ENCODE measurements at regions of chr1 and their contacts with region 1.

Region 1: GRCh38 chr1:19882111-19883071 is at the start of gene OTUD3:
- DNase-seq: peak; percentile 89 to 99 (median 94)
- ATAC-seq: peak; percentile 98
- H3K4me3 ChIP-seq: peak within 1 kb of the TSS; percentile 84
- H3K4me3 Mint-ChIP-seq: peak within 1 kb of the TSS; percentile 91
- H3K27ac ChIP-seq: peak within 1 kb of the TSS in 1 of 2 donors; percentile 55
- H3K27ac Mint-ChIP-seq: peak within 1 kb of the TSS; percentile 65
- H3K4me1 ChIP-seq: peaks cover 19% of the 10 kb centered on the region
- H3K4me1 Mint-ChIP-seq: peaks cover 47% of the 10 kb centered on the region
- H3K27me3 ChIP-seq: no peaks in the 10 kb centered on the region
- H3K27me3 Mint-ChIP-seq: peaks cover 8% of the 10 kb centered on the region
- CTCF ChIP-seq: peak; percentile 90
- total RNA-seq, gene OTUD3: 11.4 to 12.6 TPM

Region 2: GRCh38 chr1:19209990-19210771 is 672.2 kb before region 1 on chr1 and contains the start of gene UBR4:
- CTCF ChIA-PET with region 1: no interaction called
- POLR2A ChIA-PET with region 1: interaction called, 3 read pairs
- intact Hi-C with region 1: loop called in 1 of 2 experiments (anchors 10 kb)
- DNase-seq: peak; percentile 92 to 99 (median 96)
- ATAC-seq: peak; percentile 92
- H3K4me3 ChIP-seq: peak within 1 kb of the TSS; percentile 93
- H3K4me3 Mint-ChIP-seq: peak within 1 kb of the TSS; percentile 96
- H3K27ac ChIP-seq: peak within 1 kb of the TSS; percentile 87 to 92
- H3K27ac Mint-ChIP-seq: peak within 1 kb of the TSS; percentile 95
- H3K4me1 ChIP-seq: peaks cover 42% of the 10 kb centered on the region
- H3K4me1 Mint-ChIP-seq: peaks cover 77% of the 10 kb centered on the region
- H3K27me3 ChIP-seq: no peaks in the 10 kb centered on the region
- H3K27me3 Mint-ChIP-seq: no peaks in the 10 kb centered on the region
- CTCF ChIP-seq: no peak
- total RNA-seq, gene UBR4: 116 to 125 TPM

Region 3: DNA sequence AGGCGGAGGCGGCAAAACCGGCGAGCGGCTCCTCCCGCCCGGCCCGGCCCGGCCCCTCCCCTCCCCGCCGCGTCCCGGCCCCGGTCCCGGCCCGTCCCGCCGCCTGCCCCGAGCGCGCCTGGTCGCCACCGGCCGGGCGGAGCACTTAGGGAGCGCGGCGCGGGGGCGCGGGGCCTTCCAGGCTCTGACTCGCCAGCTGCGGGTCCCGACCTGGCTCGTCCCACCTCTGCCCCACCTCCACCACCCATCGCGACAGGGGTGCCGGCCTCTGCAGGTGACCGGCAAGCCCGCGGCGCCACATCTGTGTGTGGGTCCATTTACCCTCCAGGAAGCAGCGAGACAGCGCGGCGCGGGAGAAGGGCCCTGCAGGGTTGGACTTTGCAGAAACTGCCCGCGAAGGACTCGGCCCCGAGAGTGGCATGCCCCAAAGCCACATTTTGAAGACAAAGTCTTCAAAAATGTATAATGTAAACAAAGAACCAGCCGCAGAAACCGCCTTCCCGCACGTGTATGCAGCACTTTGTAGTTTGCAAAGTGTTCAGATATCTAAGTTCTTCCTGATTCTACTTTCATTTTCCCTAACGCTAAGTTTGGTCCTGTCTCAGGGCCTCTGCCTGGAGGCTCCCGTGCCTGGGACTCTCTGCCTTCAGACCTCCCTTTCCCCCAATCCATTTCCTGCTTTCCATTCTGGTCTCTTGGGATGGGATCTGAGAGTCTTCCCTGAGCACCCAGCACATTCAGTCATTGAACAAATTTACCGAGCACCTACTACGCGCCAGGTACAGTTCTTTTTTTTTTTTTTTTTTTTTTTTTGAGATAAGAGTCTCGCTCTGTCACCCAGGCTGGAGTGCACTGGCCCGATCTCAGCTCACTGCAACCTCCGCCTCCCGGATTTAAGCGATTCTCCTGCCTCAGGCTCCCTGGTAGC is 82.2 kb before region 1 on chr1 and contains the start of gene TMCO4:
- CTCF ChIA-PET with region 1: no interaction called
- POLR2A ChIA-PET with region 1: no interaction called
- intact Hi-C with region 1: loop called in 1 of 2 experiments (anchors 2 kb)
- DNase-seq: peak; percentile 20 to 69 (median 38)
- ATAC-seq: peak; percentile 66
- H3K4me3 ChIP-seq: peak within 1 kb of the TSS; percentile 90
- H3K4me3 Mint-ChIP-seq: peak within 1 kb of the TSS; percentile 96
- H3K27ac ChIP-seq: peak within 1 kb of the TSS; percentile 65 to 85
- H3K27ac Mint-ChIP-seq: peak within 1 kb of the TSS; percentile 95
- H3K4me1 ChIP-seq: peaks cover 30% of the 10 kb centered on the region
- H3K4me1 Mint-ChIP-seq: peaks cover 31% of the 10 kb centered on the region
- H3K27me3 ChIP-seq: no peaks in the 10 kb centered on the region
- H3K27me3 Mint-ChIP-seq: no peaks in the 10 kb centered on the region
- CTCF ChIP-seq: no peak
- total RNA-seq, gene TMCO4: 12.4 to 13.9 TPM

Region 4: GRCh38 chr1:20485527-20486456 is 603.4 kb after region 1 on chr1 and contains the start of gene CAMK2N1:
- CTCF ChIA-PET with region 1: no interaction called
- POLR2A ChIA-PET with region 1: interaction called, 4 read pairs
- intact Hi-C with region 1: loop called in 1 of 2 experiments (anchors 1 kb)
- DNase-seq: peak; percentile 23 to 82 (median 60)
- ATAC-seq: peak; percentile 73
- H3K4me3 ChIP-seq: peak within 1 kb of the TSS; percentile 62
- H3K4me3 Mint-ChIP-seq: peak within 1 kb of the TSS; percentile 86
- H3K27ac ChIP-seq: no peak within 1 kb of the TSS
- H3K27ac Mint-ChIP-seq: peak within 1 kb of the TSS; percentile 60
- H3K4me1 ChIP-seq: peaks cover 29% of the 10 kb centered on the region
- H3K4me1 Mint-ChIP-seq: peaks cover 17% of the 10 kb centered on the region
- H3K27me3 ChIP-seq: peaks cover 31 to 51% of the 10 kb centered on the region in 2 experiments
- H3K27me3 Mint-ChIP-seq: peaks cover 59% of the 10 kb centered on the region
- CTCF ChIP-seq: no peak
- total RNA-seq, gene CAMK2N1: 2.3 TPM

Region 5: GRCh38 chr1:20633190-20634064 is 751.0 kb after region 1 on chr1 and contains the start of gene PINK1:
- CTCF ChIA-PET with region 1: no interaction called
- POLR2A ChIA-PET with region 1: interaction called, 4 read pairs
- intact Hi-C with region 1: loop called in 1 of 2 experiments (anchors 5 kb)
- DNase-seq: peak; percentile 72 to 97 (median 86)
- ATAC-seq: peak; percentile 84
- H3K4me3 ChIP-seq: peak within 1 kb of the TSS; percentile 69
- H3K4me3 Mint-ChIP-seq: peak within 1 kb of the TSS; percentile 94
- H3K27ac ChIP-seq: peak within 1 kb of the TSS; percentile 52 to 72
- H3K27ac Mint-ChIP-seq: peak within 1 kb of the TSS; percentile 87
- H3K4me1 ChIP-seq: peaks cover 18% of the 10 kb centered on the region
- H3K4me1 Mint-ChIP-seq: peaks cover 12% of the 10 kb centered on the region
- H3K27me3 ChIP-seq: peaks cover 0 to 3% of the 10 kb centered on the region in 2 experiments
- H3K27me3 Mint-ChIP-seq: peaks cover 5% of the 10 kb centered on the region
- CTCF ChIP-seq: peak; percentile 99
- total RNA-seq, gene PINK1: 6.6 to 7.5 TPM

Measured in CD4-positive, alpha-beta T cell (primary cell).